Activated CD8-positive, alpha-beta T cell treated with anti-CD3 and anti-CD28 coated beads for 36 hours (primary cell): ENCODE measurements at regions of chr5 and their contacts with region 1.

Region 1: GRCh38 chr5:111072949-111073682 is 1.6 kb downstream of the TSLP start:
- DNase-seq: peak; percentile 78
- ATAC-seq: peak; percentile 88
- H3K4me3 Mint-ChIP-seq: peak overlapping the region; percentile 82
- H3K27ac Mint-ChIP-seq: peak overlapping the region; percentile 4
- H3K4me1 Mint-ChIP-seq: peaks cover 27% of the 10 kb centered on the region
- H3K27me3 Mint-ChIP-seq: peaks cover 70% of the 10 kb centered on the region
- CTCF ChIP-seq: no peak

Region 2: DNA sequence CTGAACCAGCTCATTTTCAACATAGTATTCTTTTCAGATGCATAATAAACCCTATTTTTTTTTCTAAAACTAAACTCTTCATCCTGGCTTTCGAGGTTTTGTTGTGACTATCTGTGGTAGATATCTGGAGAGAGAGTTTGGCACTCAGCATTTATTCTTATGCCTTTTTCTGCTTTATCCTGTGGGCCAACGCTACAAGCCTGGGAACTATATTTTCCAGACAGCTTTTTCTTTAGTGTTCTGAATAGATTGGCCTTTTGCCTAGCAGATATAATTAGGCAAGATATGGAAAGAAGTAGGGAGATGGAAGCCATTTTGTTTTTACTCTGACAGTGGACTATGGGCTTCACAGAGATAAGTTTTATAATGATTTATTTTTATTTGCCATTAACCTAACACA is 833.3 kb before region 1 on chr5:
- CTCF ChIA-PET with region 1: no interaction called
- POLR2A ChIA-PET with region 1: no interaction called
- intact Hi-C with region 1: no loop called
- DNase-seq: no peak
- ATAC-seq: no peak
- H3K4me3 Mint-ChIP-seq: no peak overlapping the region
- H3K27ac Mint-ChIP-seq: no peak overlapping the region
- H3K4me1 Mint-ChIP-seq: no peaks in the 10 kb centered on the region
- H3K27me3 Mint-ChIP-seq: no peaks in the 10 kb centered on the region
- CTCF ChIP-seq: no peak

Region 3: GRCh38 chr5:111016801-111017200 is 56.3 kb before region 1 on chr5:
- CTCF ChIA-PET with region 1: no interaction called
- POLR2A ChIA-PET with region 1: no interaction called
- intact Hi-C with region 1: loop called (anchors 2 kb)
- DNase-seq: no peak
- ATAC-seq: no peak
- H3K4me3 Mint-ChIP-seq: no peak overlapping the region
- H3K27ac Mint-ChIP-seq: no peak overlapping the region
- H3K4me1 Mint-ChIP-seq: no peaks in the 10 kb centered on the region
- H3K27me3 Mint-ChIP-seq: peaks cover 12% of the 10 kb centered on the region
- CTCF ChIP-seq: no peak

Region 4: DNA sequence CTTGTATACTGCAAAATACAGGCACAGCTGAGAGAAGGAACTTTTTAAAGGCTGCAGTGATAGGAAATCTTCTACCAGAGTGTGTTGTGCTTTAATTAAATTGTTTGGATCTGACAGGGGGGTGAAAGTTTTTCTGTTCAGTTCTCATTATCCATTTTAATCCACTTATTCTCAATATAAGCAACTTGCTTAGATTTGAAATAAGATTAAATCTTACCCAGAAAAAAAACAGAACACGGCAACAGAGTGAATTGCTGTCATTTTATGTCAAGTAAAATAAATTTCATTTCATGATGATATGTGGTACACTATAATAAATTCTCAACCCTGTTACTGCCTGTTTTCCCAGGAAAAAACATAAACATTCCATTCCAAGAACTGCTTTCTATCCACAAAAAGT is 114.0 kb after region 1 on chr5:
- CTCF ChIA-PET with region 1: no interaction called
- POLR2A ChIA-PET with region 1: no interaction called
- intact Hi-C with region 1: no loop called
- DNase-seq: no peak
- ATAC-seq: no peak
- H3K4me3 Mint-ChIP-seq: no peak overlapping the region
- H3K27ac Mint-ChIP-seq: no peak overlapping the region
- H3K4me1 Mint-ChIP-seq: no peaks in the 10 kb centered on the region
- H3K27me3 Mint-ChIP-seq: peaks cover 5% of the 10 kb centered on the region
- CTCF ChIP-seq: no peak